Psoas muscle (tissue), 8 donors: ENCODE measurements at regions of chr19 and their contacts with region 1.

Region 1: GRCh38 chr19:17854061-17854460 is 5.6 kb upstream of the RPL18A start:
- DNase-seq: no peak
- ATAC-seq: no peak
- H3K4me3 ChIP-seq: no peak overlapping the region
- H3K27ac ChIP-seq: no peak overlapping the region
- H3K4me1 ChIP-seq: no peaks in the 10 kb centered on the region
- H3K27me3 ChIP-seq: no peaks in the 10 kb centered on the region
- CTCF ChIP-seq: no peak

Region 2: GRCh38 chr19:17703824-17704463 is 150.1 kb before region 1 on chr19:
- intact Hi-C with region 1: loop called in 1 of 2 experiments (anchors 5 kb)
- DNase-seq: peak in 1 of 2 donors; percentile 55
- ATAC-seq: peak in 3 of 4 donors; percentile 37 to 66 (median 62)
- H3K4me3 ChIP-seq: no peak overlapping the region
- H3K27ac ChIP-seq: no peak overlapping the region
- H3K4me1 ChIP-seq: no peaks in the 10 kb centered on the region
- H3K27me3 ChIP-seq: peaks cover 0 to 25% (median 0%) of the 10 kb centered on the region in 3 donors
- CTCF ChIP-seq: peak; percentile 70

Region 3: DNA sequence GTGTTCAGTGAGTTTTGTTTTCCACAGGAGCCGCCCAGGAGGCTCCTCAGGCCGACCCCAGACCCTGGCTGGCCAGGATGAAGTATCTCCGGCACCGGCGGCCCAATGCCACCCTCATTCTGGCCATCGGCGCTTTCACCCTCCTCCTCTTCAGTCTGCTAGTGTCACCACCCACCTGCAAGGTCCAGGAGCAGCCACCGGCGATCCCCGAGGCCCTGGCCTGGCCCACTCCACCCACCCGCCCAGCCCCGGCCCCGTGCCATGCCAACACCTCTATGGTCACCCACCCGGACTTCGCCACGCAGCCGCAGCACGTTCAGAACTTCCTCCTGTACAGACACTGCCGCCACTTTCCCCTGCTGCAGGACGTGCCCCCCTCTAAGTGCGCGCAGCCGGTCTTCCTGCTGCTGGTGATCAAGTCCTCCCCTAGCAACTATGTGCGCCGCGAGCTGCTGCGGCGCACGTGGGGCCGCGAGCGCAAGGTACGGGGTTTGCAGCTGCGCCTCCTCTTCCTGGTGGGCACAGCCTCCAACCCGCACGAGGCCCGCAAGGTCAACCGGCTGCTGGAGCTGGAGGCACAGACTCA is 46.2 kb before region 1 on chr19:
- intact Hi-C with region 1: loop called in 1 of 2 experiments (anchors 1 kb)
- DNase-seq: no peak
- ATAC-seq: no peak
- H3K4me3 ChIP-seq: no peak overlapping the region
- H3K27ac ChIP-seq: no peak overlapping the region
- H3K4me1 ChIP-seq: no peaks in the 10 kb centered on the region
- H3K27me3 ChIP-seq: peaks cover 0 to 7% (median 0%) of the 10 kb centered on the region in 3 donors
- CTCF ChIP-seq: no peak

Region 4: DNA sequence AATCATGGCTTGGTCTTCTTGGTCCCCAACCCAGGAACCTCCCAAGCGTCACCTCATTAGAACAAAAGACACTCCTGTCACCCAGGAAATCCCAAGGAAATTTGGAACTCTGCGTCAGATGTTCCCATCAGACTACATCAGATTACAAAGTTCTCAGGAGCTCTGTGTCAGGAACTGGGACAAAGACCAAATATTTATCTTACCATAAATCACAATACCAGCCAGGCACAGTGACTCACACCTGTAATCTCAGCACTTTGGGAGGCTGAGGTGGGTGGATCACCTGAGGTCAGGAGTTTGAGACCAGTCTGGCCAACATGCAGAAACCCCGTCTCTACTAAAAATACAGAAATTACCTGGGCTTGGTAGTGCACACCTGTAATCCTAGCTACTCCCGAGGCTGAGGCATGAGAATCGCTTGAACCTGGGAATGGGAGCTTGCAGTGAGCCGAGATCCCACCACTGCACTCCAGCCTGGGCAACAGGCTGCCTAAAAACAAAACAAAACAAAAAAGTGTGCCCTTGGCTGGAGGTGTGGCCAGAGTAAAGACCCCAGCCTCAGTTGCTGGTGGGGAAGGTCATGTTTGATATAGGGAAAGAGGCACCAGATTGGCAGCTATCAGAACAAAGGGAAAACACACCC is 62.0 kb after region 1 on chr19:
- intact Hi-C with region 1: no loop called
- DNase-seq: no peak
- ATAC-seq: no peak
- H3K4me3 ChIP-seq: no peak overlapping the region
- H3K27ac ChIP-seq: no peak overlapping the region
- H3K4me1 ChIP-seq: no peaks in the 10 kb centered on the region
- H3K27me3 ChIP-seq: peaks cover 0 to 3% (median 2%) of the 10 kb centered on the region in 3 donors
- CTCF ChIP-seq: no peak

Region 5: GRCh38 chr19:18029617-18030338 is 175.7 kb after region 1 on chr19:
- intact Hi-C with region 1: no loop called
- DNase-seq: peak; percentile 78 to 92
- ATAC-seq: peak; percentile 91 to 97 (median 96)
- H3K4me3 ChIP-seq: no peak overlapping the region
- H3K27ac ChIP-seq: peak overlapping the region; percentile 90
- H3K4me1 ChIP-seq: peaks cover 25% of the 10 kb centered on the region
- H3K27me3 ChIP-seq: no peaks in the 10 kb centered on the region
- CTCF ChIP-seq: no peak